ENCODE measurements at regions of chr5 and their contacts with region 1.

Region 1: DNA sequence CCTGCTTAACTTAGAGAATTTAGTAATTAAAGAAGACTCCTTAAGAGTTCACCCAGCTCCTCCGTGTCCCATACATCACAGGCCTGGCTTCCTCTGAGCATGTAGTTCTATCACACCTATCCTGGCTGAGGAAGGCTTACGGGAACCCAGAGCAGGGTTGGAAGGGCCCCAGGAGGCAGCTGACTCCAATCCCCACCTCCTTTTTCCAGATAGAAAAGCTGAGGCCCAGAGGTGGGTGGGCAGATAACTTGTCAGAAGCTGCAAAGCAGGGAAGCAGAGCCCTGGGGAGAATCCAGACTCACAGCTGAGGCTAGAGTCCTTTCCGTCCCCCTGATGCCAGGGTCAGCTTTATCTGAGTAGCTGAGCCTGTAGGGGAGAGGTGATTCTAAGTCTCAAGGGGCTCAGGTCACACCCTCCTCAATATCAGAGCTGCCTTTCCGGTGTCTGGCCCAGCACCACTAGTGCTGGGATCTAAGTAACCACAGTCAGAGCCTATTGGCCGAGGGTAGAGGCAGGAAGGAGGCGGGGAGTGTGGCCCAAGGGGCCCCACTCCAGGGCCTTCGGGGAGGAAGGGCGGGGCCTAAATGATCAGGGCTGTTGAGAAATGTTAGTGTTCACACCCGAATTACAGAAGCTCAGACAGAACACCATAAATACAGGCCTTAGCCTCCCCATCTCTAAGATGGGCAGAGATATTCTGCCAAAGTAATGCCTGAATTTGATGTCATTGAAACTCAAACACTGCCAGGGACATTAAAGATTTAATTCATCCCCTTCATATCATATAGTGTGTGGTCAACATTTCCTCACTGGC is 9.9 kb downstream of the CCDC69 start:
- DNase-seq: peak; percentile 94
- H3K4me3 Mint-ChIP-seq: peak overlapping the region; percentile 82
- H3K27ac Mint-ChIP-seq: peak overlapping the region; percentile 97
- H3K4me1 Mint-ChIP-seq: peaks cover 69% of the 10 kb centered on the region
- H3K27me3 Mint-ChIP-seq: no peaks in the 10 kb centered on the region

Region 2: DNA sequence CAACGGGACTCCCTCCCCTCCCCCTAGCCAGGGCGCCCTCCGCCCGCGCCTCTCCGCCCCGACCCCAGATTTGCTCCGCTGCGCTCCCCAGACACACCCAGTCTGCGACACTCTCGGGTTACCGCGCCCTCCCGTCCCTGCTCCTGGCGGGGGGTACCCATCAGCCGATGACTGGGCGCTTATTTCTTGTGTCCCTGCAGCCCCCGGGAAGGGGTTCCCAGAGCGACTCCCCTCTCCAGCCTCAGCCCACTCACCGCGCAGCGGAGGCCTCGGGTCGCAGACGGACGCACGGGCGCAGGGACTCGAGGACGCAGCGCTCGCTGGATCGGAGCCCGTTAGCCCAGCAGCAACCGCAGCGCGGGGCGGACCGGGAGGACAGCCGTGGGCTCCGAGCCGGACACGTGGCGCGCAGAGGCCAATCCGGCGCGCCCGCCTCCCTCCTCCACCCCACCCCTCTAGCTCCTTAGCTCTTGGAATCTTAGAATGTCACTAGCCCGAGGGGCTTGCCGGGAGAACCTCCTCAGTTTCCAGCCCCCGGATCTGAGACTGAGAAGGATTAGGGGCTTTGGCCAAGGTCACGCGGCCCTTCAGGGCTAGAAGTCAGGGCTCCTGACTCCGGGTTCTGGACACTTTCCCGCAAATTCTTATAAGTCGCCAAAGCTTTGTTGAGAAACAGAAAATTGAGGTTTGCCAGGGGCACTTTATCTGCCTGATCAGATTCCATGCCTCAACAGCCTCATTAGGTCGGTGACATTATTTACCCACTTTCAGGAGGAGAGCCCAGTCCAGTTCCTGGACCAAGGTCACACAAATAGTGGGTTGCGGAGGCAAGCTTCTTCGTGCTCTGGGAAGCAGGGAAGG is 56.4 kb before region 1 on chr5 and contains the start of gene ANXA6:
- CTCF ChIA-PET with region 1: no interaction called
- POLR2A ChIA-PET with region 1: no interaction called
- intact Hi-C with region 1: loop called (anchors 1 kb)
- DNase-seq: peak; percentile 80
- H3K4me3 Mint-ChIP-seq: peak within 1 kb of the TSS; percentile 97
- H3K27ac Mint-ChIP-seq: peak within 1 kb of the TSS; percentile 90
- H3K4me1 Mint-ChIP-seq: peaks cover 52% of the 10 kb centered on the region
- H3K27me3 Mint-ChIP-seq: no peaks in the 10 kb centered on the region
- total RNA-seq, gene ANXA6: 430 to 443 TPM

Region 3: DNA sequence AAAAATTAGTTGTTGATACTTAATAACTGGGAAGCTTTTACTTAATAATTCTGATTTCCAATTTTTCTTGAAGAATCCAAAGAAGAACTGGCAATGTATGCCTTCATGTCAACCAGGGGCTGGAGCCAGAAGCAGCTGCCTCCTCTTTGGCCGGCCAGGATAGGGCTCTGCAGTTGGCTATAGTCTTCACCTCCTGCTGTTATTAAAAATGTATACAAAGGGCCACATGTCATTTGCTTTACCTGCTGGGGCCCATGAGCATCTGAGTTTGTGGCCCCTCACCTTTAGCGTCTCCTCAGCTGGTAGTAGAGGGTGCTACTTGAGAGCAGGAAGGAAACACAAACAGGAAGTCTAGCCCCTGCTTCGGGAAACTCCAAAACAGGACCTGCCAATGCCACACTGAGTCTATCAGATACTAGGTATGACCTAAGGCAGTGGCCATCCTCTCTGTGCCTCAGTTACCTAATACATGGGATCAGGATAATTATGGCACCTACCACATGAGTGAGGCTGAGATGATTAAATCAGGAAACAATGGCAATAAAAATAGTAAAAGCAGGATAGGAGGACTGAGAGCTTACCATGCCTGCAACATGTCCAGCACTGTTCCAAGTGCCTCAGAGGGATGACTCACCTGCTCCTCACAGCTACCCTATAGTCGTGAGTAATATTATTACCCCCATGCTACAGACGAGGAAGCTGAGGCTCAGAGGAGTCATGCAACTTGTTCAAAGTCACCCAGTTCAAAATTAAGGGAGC is 11.4 kb before region 1 on chr5:
- CTCF ChIA-PET with region 1: interaction called, 4 read pairs
- POLR2A ChIA-PET with region 1: interaction called, 17 read pairs
- intact Hi-C with region 1: loop called (anchors 1 kb)
- DNase-seq: peak; percentile 76
- H3K4me3 Mint-ChIP-seq: no peak overlapping the region
- H3K27ac Mint-ChIP-seq: peak overlapping the region; percentile 83
- H3K4me1 Mint-ChIP-seq: peaks cover 29% of the 10 kb centered on the region
- H3K27me3 Mint-ChIP-seq: no peaks in the 10 kb centered on the region

Region 4: DNA sequence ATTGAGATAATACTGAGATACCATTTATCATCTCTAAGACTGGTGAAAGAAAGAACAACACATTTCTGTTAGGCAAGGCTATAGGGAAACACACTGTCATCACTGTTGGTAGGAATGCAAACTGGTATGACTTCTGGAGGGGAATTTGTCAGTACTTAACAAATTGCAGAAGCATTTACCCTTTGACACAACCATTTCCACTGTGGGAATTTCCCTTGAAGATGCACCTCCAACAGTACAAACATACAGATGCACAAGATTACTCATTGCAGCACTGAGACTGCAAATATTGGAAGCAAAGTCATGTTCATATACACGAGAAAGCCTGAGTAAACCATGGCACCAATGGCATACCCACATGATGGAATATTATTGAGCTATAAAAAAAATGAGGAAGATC is 56.6 kb after region 1 on chr5:
- CTCF ChIA-PET with region 1: no interaction called
- POLR2A ChIA-PET with region 1: no interaction called
- intact Hi-C with region 1: loop called (anchors 1 kb)
- DNase-seq: no peak
- H3K4me3 Mint-ChIP-seq: no peak overlapping the region
- H3K27ac Mint-ChIP-seq: no peak overlapping the region
- H3K4me1 Mint-ChIP-seq: no peaks in the 10 kb centered on the region
- H3K27me3 Mint-ChIP-seq: no peaks in the 10 kb centered on the region

Measured in activated CD4-positive, alpha-beta memory T cell treated with anti-CD3 and anti-CD28 coated beads for 36 hours (primary cell).